MCF 10A (cell line): ENCODE measurements at regions of chr2 and their contacts with region 1.

Region 1: DNA sequence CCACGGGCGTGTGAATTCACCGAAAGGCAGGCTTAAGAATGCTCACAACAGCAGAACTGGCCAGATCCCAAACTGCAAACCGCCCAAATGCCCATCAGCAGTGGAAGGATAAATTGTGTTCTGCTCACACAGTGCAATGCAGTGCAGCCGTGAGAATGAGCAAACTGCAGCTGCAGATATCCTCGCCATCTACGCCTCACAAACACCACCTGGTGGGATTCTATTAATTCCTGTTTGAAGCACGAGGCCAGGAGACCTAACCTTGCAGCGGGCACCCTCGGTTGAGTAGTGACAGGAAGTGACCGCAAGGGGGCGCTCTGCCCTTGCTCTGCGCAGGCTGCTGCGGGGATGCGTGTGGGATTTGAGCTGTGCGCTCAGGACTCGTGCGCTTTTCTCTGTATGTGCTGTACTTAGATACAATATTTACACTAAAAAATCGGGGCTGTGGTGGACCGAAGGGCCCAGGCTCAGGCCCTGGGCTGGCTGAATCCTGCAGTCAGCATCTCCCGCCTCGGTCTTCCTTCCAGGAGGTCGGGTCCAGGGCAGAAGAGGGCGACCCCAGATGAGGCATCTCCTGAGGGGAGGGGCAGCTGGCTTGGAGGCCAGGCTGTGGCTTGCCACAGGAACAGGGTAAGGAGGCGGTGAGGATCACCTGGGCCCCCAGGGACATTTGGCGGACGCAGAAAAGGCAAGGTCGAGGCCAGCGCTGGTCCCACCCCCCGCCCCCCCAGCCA is 19.8 kb upstream of the PDIA6 start:
- DNase-seq: peak; percentile 76
- H3K4me3 Mint-ChIP-seq: no peak overlapping the region
- H3K27ac Mint-ChIP-seq: no peak overlapping the region
- H3K4me1 Mint-ChIP-seq: no peaks in the 10 kb centered on the region
- H3K27me3 Mint-ChIP-seq: peaks cover 45% of the 10 kb centered on the region
- CTCF ChIP-seq: peak; percentile 97

Region 2: GRCh38 chr2:10709290-10709939 is 123.0 kb before region 1 on chr2:
- CTCF ChIA-PET with region 1: no interaction called
- POLR2A ChIA-PET with region 1: no interaction called
- intact Hi-C with region 1: loop called (anchors 1 kb)
- DNase-seq: peak; percentile 71
- H3K4me3 Mint-ChIP-seq: no peak overlapping the region
- H3K27ac Mint-ChIP-seq: no peak overlapping the region
- H3K4me1 Mint-ChIP-seq: peaks cover 7% of the 10 kb centered on the region
- H3K27me3 Mint-ChIP-seq: peaks cover 52% of the 10 kb centered on the region
- CTCF ChIP-seq: peak; percentile 53

Region 3: DNA sequence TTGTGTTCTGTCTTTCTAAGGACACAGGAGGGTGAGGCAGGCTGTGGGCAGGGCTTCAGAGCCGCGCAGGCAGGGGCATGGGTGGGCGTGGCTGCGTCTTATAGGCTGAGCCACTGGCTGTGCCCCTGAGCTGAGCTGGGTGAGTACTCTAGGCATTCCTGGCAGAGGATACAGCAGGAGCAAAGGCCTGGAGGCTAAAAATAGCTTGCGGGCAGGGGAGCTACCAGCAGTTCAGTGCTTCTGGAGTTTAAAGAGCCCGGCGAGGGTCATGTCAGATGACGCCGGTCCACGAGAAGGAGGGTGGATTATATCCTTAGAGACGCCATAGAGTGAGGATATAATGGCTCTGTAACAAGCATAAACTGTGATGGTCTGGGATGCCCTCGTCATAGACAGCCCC is 11.7 kb after region 1 on chr2:
- CTCF ChIA-PET with region 1: interaction called, 35 read pairs
- POLR2A ChIA-PET with region 1: no interaction called
- intact Hi-C with region 1: no loop called
- DNase-seq: peak; percentile 64
- H3K4me3 Mint-ChIP-seq: no peak overlapping the region
- H3K27ac Mint-ChIP-seq: no peak overlapping the region
- H3K4me1 Mint-ChIP-seq: peaks cover 10% of the 10 kb centered on the region
- H3K27me3 Mint-ChIP-seq: peaks cover 13% of the 10 kb centered on the region
- CTCF ChIP-seq: no peak

Region 4: DNA sequence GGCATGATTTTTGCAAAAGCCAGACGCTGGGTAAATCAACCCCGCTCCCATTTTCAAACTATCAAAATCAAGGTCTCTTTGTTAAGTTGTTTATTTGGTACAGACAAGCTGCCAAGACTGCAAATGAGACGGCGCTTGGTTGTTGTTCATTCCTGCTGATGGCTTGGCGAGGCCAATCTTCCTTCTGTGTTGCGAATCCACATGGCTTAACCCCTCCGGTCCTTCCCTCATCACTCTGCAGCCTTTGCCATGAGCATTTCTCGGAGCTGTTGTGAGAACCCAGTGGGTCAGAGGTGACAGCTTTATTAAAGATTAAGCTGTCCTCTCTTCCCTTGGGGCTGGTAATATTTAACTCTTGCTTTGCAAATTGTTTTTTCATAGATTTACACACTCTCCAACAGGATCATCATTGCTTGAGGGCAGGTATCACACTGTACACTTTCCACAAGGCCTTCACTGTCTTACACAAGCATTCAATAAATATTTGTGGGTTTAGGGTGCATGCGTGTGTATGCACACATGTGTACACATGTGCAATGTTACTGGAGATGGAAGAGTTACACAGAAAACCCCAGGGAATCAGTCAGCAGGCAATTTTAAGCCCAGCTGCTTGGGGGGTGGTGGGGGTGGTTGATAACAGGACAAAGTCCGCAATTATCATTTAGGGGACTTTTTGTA is 51.6 kb after region 1 on chr2:
- CTCF ChIA-PET with region 1: no interaction called
- POLR2A ChIA-PET with region 1: no interaction called
- intact Hi-C with region 1: no loop called
- DNase-seq: no peak
- H3K4me3 Mint-ChIP-seq: no peak overlapping the region
- H3K27ac Mint-ChIP-seq: no peak overlapping the region
- H3K4me1 Mint-ChIP-seq: no peaks in the 10 kb centered on the region
- H3K27me3 Mint-ChIP-seq: peaks cover 32% of the 10 kb centered on the region
- CTCF ChIP-seq: no peak

Region 5: DNA sequence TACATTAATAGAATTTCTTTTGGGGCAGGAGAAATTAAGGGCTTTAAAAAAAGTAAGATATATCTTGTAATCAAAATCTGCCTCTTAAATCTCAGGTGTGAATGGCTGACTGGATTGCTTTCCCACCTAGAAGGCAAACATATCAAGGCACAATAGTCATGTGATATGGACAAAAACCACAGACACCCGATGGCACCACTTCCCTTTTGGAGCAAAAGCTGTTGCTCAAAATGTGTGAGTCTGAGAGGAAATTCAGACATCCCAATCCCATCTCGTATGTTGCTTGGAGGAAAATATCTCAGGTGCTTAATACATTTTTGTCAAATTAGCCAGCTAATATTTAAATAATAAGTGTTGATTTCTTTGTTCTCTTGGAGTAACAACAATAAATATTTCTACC is 200.0 kb after region 1 on chr2:
- CTCF ChIA-PET with region 1: no interaction called
- POLR2A ChIA-PET with region 1: no interaction called
- intact Hi-C with region 1: loop called (anchors 10 kb)
- DNase-seq: no peak
- H3K4me3 Mint-ChIP-seq: no peak overlapping the region
- H3K27ac Mint-ChIP-seq: no peak overlapping the region
- H3K4me1 Mint-ChIP-seq: no peaks in the 10 kb centered on the region
- H3K27me3 Mint-ChIP-seq: peaks cover 72% of the 10 kb centered on the region
- CTCF ChIP-seq: no peak

Region 6: DNA sequence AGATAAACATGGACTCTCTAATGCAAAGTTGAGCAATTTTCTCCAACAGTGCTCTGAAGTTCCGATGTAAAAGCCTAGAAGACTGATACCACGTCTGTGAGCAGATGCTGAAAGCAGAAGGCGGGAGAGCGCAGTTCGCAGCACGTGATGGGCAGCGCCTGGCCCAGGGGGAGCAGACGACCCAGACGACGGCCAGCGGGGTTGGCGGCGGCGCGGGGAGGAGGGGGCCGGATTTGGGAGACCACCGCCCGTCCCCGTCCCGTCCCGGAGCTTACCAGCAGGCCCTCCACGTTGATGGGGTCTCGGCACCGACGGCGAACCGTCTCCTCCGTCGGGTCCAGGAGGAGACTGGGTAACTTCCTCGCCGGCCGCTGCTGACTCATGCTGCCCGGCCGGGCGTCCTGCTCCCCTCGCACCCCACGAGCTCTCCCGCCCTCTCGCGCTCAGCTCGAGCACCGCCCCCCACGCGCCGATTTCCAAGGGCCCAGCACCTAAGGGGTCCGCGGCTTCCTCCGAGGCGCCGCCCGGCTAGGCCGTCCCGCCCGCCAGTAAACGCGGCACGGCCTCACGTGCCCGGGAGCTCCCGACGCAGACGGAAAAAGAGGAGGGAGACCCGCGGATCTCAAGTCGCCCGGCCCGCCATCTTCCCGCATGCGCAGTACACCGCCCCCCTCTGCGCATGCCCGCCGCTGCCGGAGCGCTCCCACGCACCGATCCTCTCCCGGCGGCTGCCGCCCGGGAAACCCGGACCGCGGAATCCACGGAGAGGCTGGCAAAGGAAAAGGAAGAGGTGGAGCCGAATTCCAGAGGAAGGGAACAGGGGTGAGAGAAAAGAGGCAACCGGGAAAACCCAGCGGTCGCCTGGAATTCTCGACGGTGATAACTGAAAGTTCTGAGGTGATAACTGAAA is 633.4 kb after region 1 on chr2 and contains the start of gene E2F6:
- CTCF ChIA-PET with region 1: no interaction called
- POLR2A ChIA-PET with region 1: no interaction called
- intact Hi-C with region 1: loop called (anchors 10 kb)
- DNase-seq: peak; percentile 94
- H3K4me3 Mint-ChIP-seq: peak within 1 kb of the TSS; percentile 93
- H3K27ac Mint-ChIP-seq: peak within 1 kb of the TSS; percentile 87
- H3K4me1 Mint-ChIP-seq: peaks cover 15% of the 10 kb centered on the region
- H3K27me3 Mint-ChIP-seq: no peaks in the 10 kb centered on the region
- CTCF ChIP-seq: no peak
- total RNA-seq, gene E2F6: 16.1 and 16.6 TPM in 2 replicates

Region 7: GRCh38 chr2:12212841-12213597 is 1380.6 kb after region 1 on chr2:
- CTCF ChIA-PET with region 1: no interaction called
- POLR2A ChIA-PET with region 1: no interaction called
- intact Hi-C with region 1: no loop called
- DNase-seq: peak; percentile 1
- H3K4me3 Mint-ChIP-seq: no peak overlapping the region
- H3K27ac Mint-ChIP-seq: no peak overlapping the region
- H3K4me1 Mint-ChIP-seq: no peaks in the 10 kb centered on the region
- H3K27me3 Mint-ChIP-seq: no peaks in the 10 kb centered on the region
- CTCF ChIP-seq: no peak